Activated CD4-positive, alpha-beta memory T cell treated with anti-CD3 and anti-CD28 coated beads for 36 hours (primary cell): ENCODE measurements at regions of chr3 and their contacts with region 1.

Region 1: DNA sequence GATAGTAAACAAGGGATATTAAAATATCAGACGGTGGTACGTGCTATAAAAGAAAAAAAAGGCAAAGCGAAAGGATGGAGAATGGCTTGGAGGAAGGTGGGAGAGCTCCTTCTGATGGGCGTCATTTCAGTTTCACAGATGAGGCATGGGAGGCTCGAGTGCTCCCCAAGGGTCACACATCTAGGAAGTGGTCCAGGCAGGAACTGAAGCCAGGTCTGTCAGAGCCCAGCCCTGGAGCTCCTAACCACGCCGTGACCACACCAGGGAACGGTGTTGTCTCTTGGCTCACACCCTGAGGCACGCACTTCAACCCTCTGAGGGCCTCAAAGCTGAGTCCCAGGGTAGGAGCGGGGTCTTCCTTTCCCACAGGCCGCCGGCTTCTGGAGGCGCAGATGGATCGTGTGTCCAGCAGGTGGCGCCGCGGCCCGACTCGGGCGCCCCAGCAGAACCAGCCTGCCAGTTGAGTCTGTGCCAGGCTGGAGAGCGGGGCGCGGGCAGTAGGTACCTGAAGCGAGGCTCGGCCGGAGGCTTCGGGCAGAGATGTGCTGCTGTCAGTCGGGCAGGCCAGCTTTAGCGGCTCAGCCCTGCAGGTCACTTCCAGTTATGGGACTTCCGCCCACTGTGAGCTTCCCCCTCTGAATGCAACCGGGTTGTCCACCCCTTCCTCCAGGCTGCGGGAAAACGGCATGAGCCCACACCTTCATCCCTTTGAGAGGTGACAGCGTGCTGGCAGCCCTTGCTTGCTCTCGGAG is 68.1 kb downstream of the SLC6A1 start:
- DNase-seq: peak; percentile 61
- H3K4me3 Mint-ChIP-seq: no peak overlapping the region
- H3K27ac Mint-ChIP-seq: no peak overlapping the region
- H3K4me1 Mint-ChIP-seq: no peaks in the 10 kb centered on the region
- H3K27me3 Mint-ChIP-seq: peaks cover 6% of the 10 kb centered on the region

Region 2: DNA sequence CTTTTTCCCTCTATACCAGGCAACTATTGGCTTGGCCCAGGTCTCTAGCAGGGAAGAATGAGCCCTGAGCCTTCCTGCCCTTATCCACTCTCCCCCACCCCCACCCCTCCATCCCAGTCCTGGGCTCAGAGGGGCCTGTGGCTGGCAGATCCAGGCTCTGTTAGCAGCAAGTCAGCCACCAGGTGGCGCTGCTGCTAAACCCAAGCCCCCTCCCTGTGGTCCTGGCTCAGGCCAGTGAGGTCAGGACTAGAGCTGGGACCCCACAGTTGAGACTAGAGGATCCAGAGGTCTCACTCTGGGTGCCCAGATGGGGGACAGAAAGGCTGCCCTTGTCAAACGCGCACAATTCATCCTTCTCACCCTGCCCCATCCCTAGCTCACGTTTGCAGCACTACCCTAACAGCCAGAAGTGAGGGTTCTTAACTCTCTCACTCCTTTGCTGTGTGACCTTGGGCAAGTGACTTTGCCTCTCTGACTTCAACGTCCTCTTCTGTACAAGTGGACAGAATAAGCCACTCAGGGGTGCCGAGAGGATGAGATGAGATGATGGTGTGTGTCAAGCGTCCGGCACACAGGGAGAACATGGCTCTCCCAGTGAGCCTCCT is 114.9 kb before region 1 on chr3:
- CTCF ChIA-PET with region 1: interaction called, 35 read pairs
- POLR2A ChIA-PET with region 1: no interaction called
- intact Hi-C with region 1: loop called (anchors 1 kb)
- DNase-seq: peak; percentile 65
- H3K4me3 Mint-ChIP-seq: no peak overlapping the region
- H3K27ac Mint-ChIP-seq: no peak overlapping the region
- H3K4me1 Mint-ChIP-seq: no peaks in the 10 kb centered on the region
- H3K27me3 Mint-ChIP-seq: peaks cover 12% of the 10 kb centered on the region